ENCODE measurements at regions of chr18 and their contacts with region 1.

Region 1: GRCh38 chr18:35029770-35030169 is 11.4 kb upstream of the MAPRE2 start:
- DNase-seq: peak in 1 of 35 experiments; percentile 66
- ATAC-seq: peak; percentile 49 to 63 (median 56)
- H3K4me3 ChIP-seq: peak overlapping the region; percentile 51 to 52
- H3K4me3 Mint-ChIP-seq: peak overlapping the region; percentile 82 to 92 (median 83)
- H3K27ac ChIP-seq: peak overlapping the region; percentile 98
- H3K27ac Mint-ChIP-seq: peak overlapping the region; percentile 98
- H3K4me1 ChIP-seq: peaks cover 26 to 43% of the 10 kb centered on the region in 2 experiments
- H3K4me1 Mint-ChIP-seq: peaks cover 64 to 67% (median 66%) of the 10 kb centered on the region in 3 donors
- H3K27me3 ChIP-seq: no peaks in the 10 kb centered on the region
- H3K27me3 Mint-ChIP-seq: no peaks in the 10 kb centered on the region

Region 2: GRCh38 chr18:34818064-34818463 is 211.7 kb before region 1 on chr18:
- CTCF ChIA-PET with region 1: no interaction called
- POLR2A ChIA-PET with region 1: no interaction called
- DNase-seq: no peak
- ATAC-seq: no peak
- H3K4me3 ChIP-seq: no peak overlapping the region
- H3K4me3 Mint-ChIP-seq: no peak overlapping the region
- H3K27ac ChIP-seq: no peak overlapping the region
- H3K27ac Mint-ChIP-seq: no peak overlapping the region
- H3K4me1 ChIP-seq: no peaks in the 10 kb centered on the region
- H3K4me1 Mint-ChIP-seq: no peaks in the 10 kb centered on the region
- H3K27me3 ChIP-seq: no peaks in the 10 kb centered on the region
- H3K27me3 Mint-ChIP-seq: peaks cover 4 to 10% of the 10 kb centered on the region in 2 donors

Region 3: DNA sequence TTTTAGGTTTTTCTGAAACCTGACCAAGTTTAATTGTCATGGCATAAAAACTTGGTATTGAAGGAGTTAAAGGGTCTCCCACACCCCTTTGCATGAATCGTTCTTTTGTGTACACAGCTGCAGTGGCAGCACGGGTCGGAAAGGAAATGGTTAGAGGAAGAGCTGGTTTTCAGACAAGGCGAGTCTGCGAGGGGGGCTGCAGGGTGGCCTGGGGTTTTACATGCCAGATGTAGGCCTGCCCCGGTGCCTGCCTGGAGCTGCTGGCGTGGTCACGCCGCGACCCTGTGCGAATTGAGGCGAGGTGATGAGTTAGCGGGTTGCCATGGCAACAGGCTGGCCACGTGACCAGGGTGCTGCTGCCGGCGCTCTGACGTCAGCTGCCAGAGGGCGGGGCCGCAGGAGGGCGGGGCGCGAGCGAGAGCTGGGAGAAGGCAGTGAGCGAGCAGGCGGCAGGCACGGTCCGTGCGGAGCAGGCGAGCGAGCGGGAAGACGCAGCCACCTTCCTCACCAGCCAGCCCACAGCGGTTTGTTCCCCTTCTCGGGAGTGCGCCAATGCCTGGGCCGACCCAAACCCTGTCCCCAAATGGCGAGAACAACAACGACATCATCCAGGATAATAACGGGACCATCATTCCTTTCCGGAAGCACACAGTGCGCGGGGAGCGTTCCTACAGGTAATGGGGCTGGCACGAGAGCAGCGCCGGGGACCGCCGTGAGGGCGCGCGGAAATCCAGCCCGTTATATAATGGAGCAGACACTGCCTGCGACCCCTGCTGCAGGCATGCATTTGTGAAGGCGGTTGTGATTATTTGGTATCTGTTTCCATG is 11.4 kb after region 1 on chr18 and contains the start of gene MAPRE2:
- CTCF ChIA-PET with region 1: interaction called, 39 to 152 read pairs
- POLR2A ChIA-PET with region 1: interaction called, 47 to 161 read pairs
- DNase-seq: peak; percentile 96 to 100 (median 99)
- ATAC-seq: peak; percentile 82 to 89 (median 84)
- H3K4me3 ChIP-seq: peak within 1 kb of the TSS; percentile 97
- H3K4me3 Mint-ChIP-seq: peak within 1 kb of the TSS; percentile 89 to 98 (median 90)
- H3K27ac ChIP-seq: peak within 1 kb of the TSS; percentile 98
- H3K27ac Mint-ChIP-seq: peak within 1 kb of the TSS; percentile 96 to 98
- H3K4me1 ChIP-seq: peaks cover 30 to 34% of the 10 kb centered on the region in 2 experiments
- H3K4me1 Mint-ChIP-seq: peaks cover 61 to 76% (median 65%) of the 10 kb centered on the region in 3 donors
- H3K27me3 ChIP-seq: no peaks in the 10 kb centered on the region
- H3K27me3 Mint-ChIP-seq: no peaks in the 10 kb centered on the region
- total RNA-seq, gene MAPRE2: 45.6 to 96.7 (median 53.9) TPM

Region 4: GRCh38 chr18:35073186-35074105 is 43.7 kb after region 1 on chr18:
- CTCF ChIA-PET with region 1: interaction called, 5 to 10 read pairs
- POLR2A ChIA-PET with region 1: interaction called in 1 of 2 experiments, 3 read pairs
- DNase-seq: no peak
- ATAC-seq: no peak
- H3K4me3 ChIP-seq: no peak overlapping the region
- H3K4me3 Mint-ChIP-seq: no peak overlapping the region
- H3K27ac ChIP-seq: no peak overlapping the region
- H3K27ac Mint-ChIP-seq: no peak overlapping the region
- H3K4me1 ChIP-seq: no peaks in the 10 kb centered on the region
- H3K4me1 Mint-ChIP-seq: peaks cover 63 to 65% (median 65%) of the 10 kb centered on the region in 3 donors
- H3K27me3 ChIP-seq: no peaks in the 10 kb centered on the region
- H3K27me3 Mint-ChIP-seq: no peaks in the 10 kb centered on the region

Region 5: GRCh38 chr18:35143622-35144596 is 114.1 kb after region 1 on chr18:
- CTCF ChIA-PET with region 1: interaction called, 47 to 71 read pairs
- POLR2A ChIA-PET with region 1: interaction called, 3 to 17 read pairs
- DNase-seq: peak in 25 of 35 experiments; percentile 6 to 61 (median 28)
- ATAC-seq: peak in 3 of 4 experiments; percentile 61 to 81 (median 78)
- H3K4me3 ChIP-seq: no peak overlapping the region
- H3K4me3 Mint-ChIP-seq: no peak overlapping the region
- H3K27ac ChIP-seq: no peak overlapping the region
- H3K27ac Mint-ChIP-seq: peak overlapping the region in 1 of 2 donors; percentile 40
- H3K4me1 ChIP-seq: no peaks in the 10 kb centered on the region
- H3K4me1 Mint-ChIP-seq: peaks cover 0 to 10% (median 3%) of the 10 kb centered on the region in 3 donors
- H3K27me3 ChIP-seq: no peaks in the 10 kb centered on the region
- H3K27me3 Mint-ChIP-seq: no peaks in the 10 kb centered on the region